ENCODE measurements at regions of chr1 and their contacts with region 1.

Region 1: DNA sequence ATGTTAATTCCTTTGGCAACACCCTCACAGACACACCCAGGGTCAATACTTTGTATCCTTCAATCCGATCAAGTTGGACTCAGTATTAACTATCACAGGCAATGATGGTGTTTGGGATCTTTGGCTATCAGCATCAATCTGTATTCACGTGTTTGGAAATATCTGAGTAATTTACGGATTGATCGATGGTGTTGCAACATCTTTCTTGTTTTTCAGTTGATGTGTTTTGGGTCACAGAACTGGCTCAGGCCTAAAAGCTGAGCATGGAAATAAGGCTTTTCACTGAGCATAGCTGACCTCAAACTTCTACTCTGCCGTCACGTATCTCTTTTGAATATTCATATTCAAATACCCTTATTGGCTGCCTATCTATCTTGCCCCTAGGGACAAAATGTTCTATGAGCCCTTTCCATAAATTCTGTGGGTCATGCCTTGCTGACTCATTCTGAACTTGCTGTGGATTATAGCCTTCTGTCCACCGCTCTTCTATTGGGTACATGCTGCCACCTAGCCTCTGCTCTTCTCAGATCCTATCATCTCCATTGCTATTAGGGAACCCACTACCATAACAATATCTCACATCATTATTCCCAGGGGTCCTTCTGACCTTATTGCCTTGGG is 156.0 kb downstream of the PDE4B start:
- DNase-seq: peak; percentile 12 to 66 (median 28)
- ATAC-seq: peak; percentile 91
- H3K4me3 ChIP-seq: no peak overlapping the region
- H3K27ac ChIP-seq: no peak overlapping the region; the same call in 2 of the 3 replicates
- H3K4me1 ChIP-seq: peaks cover 0 to 10% of the 10 kb centered on the region in 2 experiments; a peak in 2 of 5 replicates
- H3K27me3 ChIP-seq: no peaks in the 10 kb centered on the region
- CTCF ChIP-seq: peak; percentile 39 to 68 (median 66); a peak in 5 of 6 replicates
- EP300 ChIP-seq: no peak
- POLR2A ChIP-seq: no peak
- RAD21 ChIP-seq: peak; percentile 57 to 82; a peak in 3 of 4 replicates

Region 2: DNA sequence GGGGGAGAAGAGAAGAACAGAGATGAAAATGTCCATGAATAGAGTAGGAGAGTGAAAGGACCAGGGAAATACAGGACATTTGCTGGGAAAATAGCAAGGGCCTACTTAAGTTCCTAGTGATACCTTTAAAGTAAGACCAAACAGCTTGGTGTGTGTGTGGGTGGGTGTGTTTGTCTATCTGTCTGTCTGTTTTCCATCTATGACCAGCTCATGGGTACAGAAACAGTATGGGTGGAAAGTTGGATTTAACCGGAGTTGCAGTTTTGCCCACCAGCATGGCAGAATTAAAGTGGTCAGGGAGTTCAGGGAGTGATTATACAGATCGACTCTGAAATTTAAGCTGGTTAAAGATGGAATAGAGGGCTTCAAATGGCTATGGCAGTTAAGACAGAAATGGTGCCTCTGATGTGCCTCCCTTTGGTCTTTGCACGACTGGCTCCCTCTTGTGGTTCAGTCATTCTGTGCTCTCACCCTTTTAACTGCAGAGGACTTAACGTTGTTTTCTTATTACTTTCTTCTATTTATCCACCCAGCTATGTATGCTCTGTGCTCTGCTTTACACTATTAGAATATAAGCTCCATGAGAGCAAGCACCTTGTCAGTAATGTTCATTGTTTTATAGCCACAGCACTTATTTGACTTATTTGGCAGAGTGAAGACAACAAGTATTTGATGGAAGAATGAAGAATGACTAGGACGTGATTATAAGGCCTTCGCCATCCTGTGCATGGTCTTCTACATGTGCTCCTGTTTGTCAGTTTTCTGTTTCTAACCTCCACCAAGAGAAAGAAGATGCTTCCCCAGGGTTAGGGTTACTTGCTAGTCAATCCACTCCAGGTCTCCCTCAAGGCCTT is 873.4 kb before region 1 on chr1:
- CTCF ChIA-PET with region 1: no interaction called
- POLR2A ChIA-PET with region 1: no interaction called
- in situ Hi-C with region 1: loop called (anchors 25 kb)
- intact Hi-C with region 1: no loop called
- DNase-seq: peak; percentile 24 to 81 (median 50)
- ATAC-seq: peak; percentile 98
- H3K4me3 ChIP-seq: no peak overlapping the region
- H3K27ac ChIP-seq: no peak overlapping the region
- H3K4me1 ChIP-seq: no peaks in the 10 kb centered on the region; a peak in 1 of 5 replicates
- H3K27me3 ChIP-seq: no peaks in the 10 kb centered on the region
- CTCF ChIP-seq: peak; percentile 77 to 91 (median 81)
- EP300 ChIP-seq: no peak
- POLR2A ChIP-seq: no peak
- RAD21 ChIP-seq: peak; percentile 62 to 84

Region 3: GRCh38 chr1:65209005-65209885 is 739.5 kb before region 1 on chr1:
- CTCF ChIA-PET with region 1: no interaction called
- POLR2A ChIA-PET with region 1: no interaction called
- in situ Hi-C with region 1: loop called (anchors 25 kb)
- intact Hi-C with region 1: no loop called
- DNase-seq: peak; percentile 72 to 78 (median 75)
- ATAC-seq: peak; percentile 92
- H3K4me3 ChIP-seq: no peak overlapping the region
- H3K27ac ChIP-seq: no peak overlapping the region; the same call in 2 of the 3 replicates
- H3K4me1 ChIP-seq: peaks cover 5 to 8% of the 10 kb centered on the region in 2 experiments; a peak in 3 of 5 replicates
- H3K27me3 ChIP-seq: no peaks in the 10 kb centered on the region
- CTCF ChIP-seq: peak; percentile 69 to 82 (median 77)
- EP300 ChIP-seq: no peak
- POLR2A ChIP-seq: no peak
- RAD21 ChIP-seq: peak; percentile 71 to 84

Region 4: DNA sequence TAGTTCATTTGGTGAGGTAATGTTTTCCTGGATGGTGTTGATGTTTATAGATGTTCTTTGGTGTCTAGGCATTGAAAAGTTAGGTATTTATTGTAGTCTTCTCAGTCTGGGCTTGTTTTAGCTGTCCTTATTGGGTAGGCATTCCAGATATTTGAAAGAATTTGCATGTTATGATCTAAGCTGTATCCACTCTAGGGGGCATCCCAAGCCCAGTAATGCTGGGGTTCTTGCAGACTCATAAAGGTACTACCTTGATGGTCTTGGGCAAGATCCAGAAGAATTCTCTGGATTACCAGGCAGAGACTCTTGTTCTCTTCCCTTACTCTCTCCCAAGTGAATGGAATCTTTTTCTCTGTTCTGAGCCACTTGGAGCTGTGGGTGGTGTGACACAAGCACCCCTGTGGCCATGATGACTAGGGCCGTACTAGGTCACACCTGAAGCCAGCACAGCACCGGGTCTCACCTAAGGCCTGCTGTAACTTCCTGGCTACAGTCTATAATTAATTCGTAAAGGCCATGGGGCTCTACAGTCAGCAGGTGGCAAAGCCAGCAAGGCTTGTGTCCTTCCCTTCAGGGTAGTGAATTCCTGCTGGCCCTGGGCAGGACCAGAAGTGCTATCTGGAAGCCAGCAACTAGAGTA is 230.8 kb before region 1 on chr1:
- CTCF ChIA-PET with region 1: no interaction called
- POLR2A ChIA-PET with region 1: no interaction called
- in situ Hi-C with region 1: loop called (anchors 5 kb)
- intact Hi-C with region 1: loop called (anchors 2 kb)
- DNase-seq: peak in 1 of 4 experiments; percentile 23
- ATAC-seq: peak; percentile 81
- H3K4me3 ChIP-seq: no peak overlapping the region
- H3K27ac ChIP-seq: no peak overlapping the region
- H3K4me1 ChIP-seq: no peaks in the 10 kb centered on the region
- H3K27me3 ChIP-seq: peaks cover 0 to 9% of the 10 kb centered on the region in 2 experiments; a peak in 1 of 5 replicates
- CTCF ChIP-seq: peak; percentile 31 to 53 (median 40); a peak in 3 of 6 replicates
- EP300 ChIP-seq: no peak
- POLR2A ChIP-seq: no peak
- RAD21 ChIP-seq: peak; percentile 43 to 80

Region 5: GRCh38 chr1:65812065-65812464 is 136.7 kb before region 1 on chr1:
- CTCF ChIA-PET with region 1: no interaction called
- POLR2A ChIA-PET with region 1: no interaction called
- in situ Hi-C with region 1: no loop called
- intact Hi-C with region 1: loop called (anchors 5 kb)
- DNase-seq: peak in 2 of 4 experiments; percentile 20 to 42
- ATAC-seq: peak; percentile 90
- H3K4me3 ChIP-seq: no peak overlapping the region
- H3K27ac ChIP-seq: no peak overlapping the region
- H3K4me1 ChIP-seq: 0 out of 5 replicates have a peak, but pooled peaks cover 0 to 3% of the 10 kb centered on the region in 2 experiments
- H3K27me3 ChIP-seq: no peaks in the 10 kb centered on the region
- CTCF ChIP-seq: no peak
- EP300 ChIP-seq: no peak
- POLR2A ChIP-seq: no peak
- RAD21 ChIP-seq: no peak

Region 6: DNA sequence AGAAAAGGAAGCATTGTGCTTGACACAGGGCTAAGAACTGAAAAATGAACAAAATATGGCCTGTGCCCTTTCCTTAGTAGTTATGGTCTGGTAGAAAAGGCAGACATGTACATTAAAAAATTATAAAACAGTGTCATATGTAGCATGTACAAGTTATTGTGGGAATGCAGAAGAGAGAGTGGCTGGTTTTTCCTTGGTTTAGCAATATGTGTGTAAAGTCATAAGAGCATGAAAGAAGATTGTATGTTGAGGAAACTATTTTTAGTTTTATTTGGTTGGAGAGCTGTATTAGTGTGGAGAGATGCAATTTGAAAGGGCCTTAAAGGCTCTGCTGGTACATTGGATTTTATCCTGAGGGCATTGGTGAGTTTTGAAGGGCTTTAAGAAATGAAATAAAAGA is 10.2 kb before region 1 on chr1:
- CTCF ChIA-PET with region 1: no interaction called
- POLR2A ChIA-PET with region 1: no interaction called
- in situ Hi-C with region 1: no loop called
- intact Hi-C with region 1: no loop called
- DNase-seq: no peak
- ATAC-seq: no peak
- H3K4me3 ChIP-seq: no peak overlapping the region
- H3K27ac ChIP-seq: no peak overlapping the region
- H3K4me1 ChIP-seq: no peaks in the 10 kb centered on the region
- H3K27me3 ChIP-seq: no peaks in the 10 kb centered on the region
- CTCF ChIP-seq: no peak
- EP300 ChIP-seq: no peak
- POLR2A ChIP-seq: no peak
- RAD21 ChIP-seq: no peak

Region 7: GRCh38 chr1:66242646-66243547 is 294.2 kb after region 1 on chr1:
- CTCF ChIA-PET with region 1: no interaction called
- POLR2A ChIA-PET with region 1: no interaction called
- in situ Hi-C with region 1: loop called (anchors 5 kb)
- intact Hi-C with region 1: no loop called
- DNase-seq: peak; percentile 64 to 84 (median 70)
- ATAC-seq: peak; percentile 100
- H3K4me3 ChIP-seq: no peak overlapping the region
- H3K27ac ChIP-seq: no peak overlapping the region
- H3K4me1 ChIP-seq: no peaks in the 10 kb centered on the region
- H3K27me3 ChIP-seq: peaks cover 0 to 2% of the 10 kb centered on the region in 2 experiments; a peak in 1 of 5 replicates
- CTCF ChIP-seq: peak; percentile 99 to 100 (median 100)
- EP300 ChIP-seq: no peak
- POLR2A ChIP-seq: no peak
- RAD21 ChIP-seq: peak; percentile 93 to 98

Region 8: DNA sequence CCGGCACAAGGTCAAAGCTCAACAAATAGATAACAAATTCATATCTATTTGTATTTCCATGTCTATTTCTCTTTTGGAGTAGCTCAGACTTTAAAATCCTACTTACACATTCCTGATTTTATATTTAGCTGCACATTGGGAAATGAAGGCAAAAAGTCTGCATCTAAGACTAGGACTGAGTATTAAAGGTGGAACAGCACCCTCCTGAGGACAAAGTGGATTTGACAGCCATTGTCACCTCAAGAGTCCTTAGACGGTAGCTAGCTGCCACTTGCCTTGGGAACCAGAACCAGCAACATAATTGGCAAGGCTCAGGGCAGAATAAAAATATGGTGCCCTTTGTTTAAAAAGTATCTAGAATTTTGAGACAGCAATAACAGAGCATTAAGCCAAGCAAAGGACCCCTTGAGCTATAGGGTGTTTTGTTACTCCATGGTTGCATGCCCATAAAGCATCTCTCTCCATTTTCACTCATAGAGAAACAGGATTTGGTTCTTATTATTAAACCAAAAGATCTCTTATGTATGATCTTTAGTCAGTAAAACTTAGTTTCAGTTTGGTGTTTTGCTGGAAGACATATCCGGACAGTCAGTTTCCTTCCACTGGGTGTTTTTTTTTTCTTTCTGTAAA is 555.2 kb after region 1 on chr1:
- CTCF ChIA-PET with region 1: no interaction called
- POLR2A ChIA-PET with region 1: no interaction called
- in situ Hi-C with region 1: no loop called
- intact Hi-C with region 1: no loop called
- DNase-seq: peak; percentile 33 to 59 (median 34)
- ATAC-seq: peak; percentile 91
- H3K4me3 ChIP-seq: no peak overlapping the region
- H3K27ac ChIP-seq: no peak overlapping the region
- H3K4me1 ChIP-seq: no peaks in the 10 kb centered on the region
- H3K27me3 ChIP-seq: peaks cover 0 to 4% of the 10 kb centered on the region in 2 experiments; a peak in 1 of 5 replicates
- CTCF ChIP-seq: peak; percentile 53 to 74 (median 68)
- EP300 ChIP-seq: no peak
- POLR2A ChIP-seq: no peak
- RAD21 ChIP-seq: peak; percentile 40 to 66

Measured in K562 (cell line).